Calu3 (cell line): ENCODE measurements at regions of chr15 and their contacts with region 1.

Region 1: DNA sequence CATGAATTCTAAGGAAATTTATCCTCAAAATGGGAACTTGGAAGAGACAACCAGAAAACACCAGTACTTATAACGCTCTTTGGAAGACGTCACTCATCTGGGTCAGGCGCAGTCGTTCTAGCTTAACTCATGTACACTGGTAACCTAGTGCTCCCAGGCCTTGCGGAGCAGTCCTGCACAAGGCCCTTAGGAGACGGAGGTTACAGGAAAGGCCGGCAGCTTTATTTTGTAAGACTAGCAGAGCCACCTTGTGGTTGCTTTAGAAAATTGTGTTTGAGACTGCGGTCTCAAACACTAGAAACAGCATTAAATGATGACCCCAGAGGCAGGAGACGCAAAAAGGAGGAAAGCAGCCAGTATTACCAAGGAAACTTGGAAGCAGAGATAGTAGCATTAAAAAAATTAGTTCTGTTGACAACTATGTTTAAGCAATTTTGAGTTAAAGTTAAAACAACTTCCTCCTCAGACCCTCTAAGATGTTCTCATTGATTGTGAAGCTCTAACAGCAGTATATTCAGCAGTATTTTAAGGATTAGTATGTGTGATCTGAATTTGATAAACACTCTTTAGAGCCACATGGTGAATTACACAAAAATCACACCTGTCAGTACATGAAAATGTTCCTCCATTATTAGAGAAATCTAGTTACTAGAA is 141.9 kb upstream of the C2CD4B start:
- DNase-seq: peak; percentile 70
- H3K4me3 Mint-ChIP-seq: peak overlapping the region; percentile 2
- H3K27ac Mint-ChIP-seq: no peak overlapping the region
- H3K4me1 Mint-ChIP-seq: peaks cover 15% of the 10 kb centered on the region
- H3K27me3 Mint-ChIP-seq: no peaks in the 10 kb centered on the region
- CTCF ChIP-seq: peak; percentile 69

Region 2: GRCh38 chr15:62052713-62053112 is 254.3 kb before region 1 on chr15:
- CTCF ChIA-PET with region 1: interaction called, 3 read pairs
- intact Hi-C with region 1: loop called (anchors 1 kb)
- DNase-seq: no peak
- H3K4me3 Mint-ChIP-seq: no peak overlapping the region
- H3K27ac Mint-ChIP-seq: no peak overlapping the region
- H3K4me1 Mint-ChIP-seq: peaks cover 54% of the 10 kb centered on the region
- H3K27me3 Mint-ChIP-seq: no peaks in the 10 kb centered on the region
- CTCF ChIP-seq: no peak

Region 3: GRCh38 chr15:62125773-62126172 is 181.2 kb before region 1 on chr15:
- CTCF ChIA-PET with region 1: interaction called, 9 read pairs
- intact Hi-C with region 1: loop called (anchors 2 kb)
- DNase-seq: peak; percentile 66
- H3K4me3 Mint-ChIP-seq: no peak overlapping the region
- H3K27ac Mint-ChIP-seq: peak overlapping the region; percentile 86
- H3K4me1 Mint-ChIP-seq: peaks cover 48% of the 10 kb centered on the region
- H3K27me3 Mint-ChIP-seq: no peaks in the 10 kb centered on the region
- CTCF ChIP-seq: peak; percentile 39

Region 4: DNA sequence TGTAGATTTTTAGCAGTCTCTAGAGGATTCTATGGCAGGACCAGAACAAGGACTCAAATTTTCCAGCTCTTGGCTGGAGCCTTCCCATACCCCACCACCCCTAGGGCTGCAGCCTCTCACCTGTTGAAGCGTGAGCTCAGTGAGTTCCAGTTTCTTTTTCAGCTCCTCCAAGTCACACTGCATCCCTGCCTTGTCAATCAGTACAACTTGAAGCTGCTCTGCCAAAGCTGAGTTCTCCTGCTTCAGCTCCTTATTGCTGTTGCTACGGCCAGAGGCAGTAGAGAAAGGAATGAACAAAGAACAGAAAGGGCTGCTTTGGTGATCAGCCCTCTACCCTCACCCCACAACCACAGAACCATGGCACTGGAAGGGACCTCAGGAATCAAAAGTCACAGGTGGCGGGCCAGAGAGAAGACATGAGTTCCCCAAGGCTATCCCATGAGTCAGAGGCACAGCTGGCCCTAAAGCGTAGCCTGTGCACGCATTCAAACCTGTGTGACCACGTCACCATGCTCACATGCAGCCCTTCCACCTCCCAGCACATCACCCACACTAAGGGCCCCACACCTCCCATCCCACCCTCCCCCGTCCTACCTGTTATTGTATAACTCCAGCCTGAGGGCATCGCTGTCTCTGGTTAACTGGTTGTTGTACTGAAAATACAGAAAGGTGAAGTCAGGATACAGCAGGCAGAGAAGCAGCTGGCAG is 58.5 kb before region 1 on chr15:
- CTCF ChIA-PET with region 1: interaction called, 12 read pairs
- intact Hi-C with region 1: no loop called
- DNase-seq: peak; percentile 71
- H3K4me3 Mint-ChIP-seq: peak overlapping the region; percentile 23
- H3K27ac Mint-ChIP-seq: peak overlapping the region; percentile 69
- H3K4me1 Mint-ChIP-seq: peaks cover 42% of the 10 kb centered on the region
- H3K27me3 Mint-ChIP-seq: no peaks in the 10 kb centered on the region
- CTCF ChIP-seq: no peak